ENCODE measurements at regions of chr6 and their contacts with region 1.

Region 1: GRCh38 chr6:38262026-38262425 is 377.7 kb downstream of the BTBD9 start:
- DNase-seq: no peak
- H3K4me3 ChIP-seq: peak overlapping the region in 2 of 59 donors; percentile 5 to 27
- H3K27ac ChIP-seq: peak overlapping the region; percentile 43 to 95 (median 84)
- H3K27me3 ChIP-seq: no peaks in the 10 kb centered on the region
- CTCF ChIP-seq: no peak

Region 2: DNA sequence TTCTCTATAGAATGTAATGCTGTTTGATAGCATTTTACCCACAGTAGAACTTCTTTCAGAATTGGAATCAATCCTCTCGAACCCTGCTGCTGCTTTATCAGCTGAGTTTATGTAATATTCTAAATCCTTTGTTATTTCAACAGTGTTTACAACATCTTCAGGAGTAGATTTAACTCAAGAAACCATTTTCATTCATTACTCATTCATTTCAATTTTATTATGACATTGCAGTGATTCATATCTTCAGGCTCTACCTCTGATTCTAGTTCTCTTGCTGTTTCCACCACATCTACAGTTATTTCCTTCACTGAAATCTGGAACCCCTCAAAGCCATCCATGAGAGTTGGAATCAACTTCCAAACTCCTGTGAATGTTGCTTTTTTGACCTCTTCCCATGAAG is 348.8 kb before region 1 on chr6:
- intact Hi-C with region 1: no loop called
- DNase-seq: no peak
- H3K4me3 ChIP-seq: no peak overlapping the region
- H3K27ac ChIP-seq: no peak overlapping the region
- H3K27me3 ChIP-seq: no peaks in the 10 kb centered on the region
- CTCF ChIP-seq: no peak

Region 3: GRCh38 chr6:38225766-38226165 is 36.3 kb before region 1 on chr6:
- intact Hi-C with region 1: loop called in 1 of 2 experiments (anchors 5 kb)
- DNase-seq: no peak
- H3K4me3 ChIP-seq: no peak overlapping the region
- H3K27ac ChIP-seq: peak overlapping the region in 1 of 59 donors; percentile 9
- H3K27me3 ChIP-seq: no peaks in the 10 kb centered on the region
- CTCF ChIP-seq: no peak